ENCODE measurements at regions of chr3 and their contacts with region 1.

Region 1: DNA sequence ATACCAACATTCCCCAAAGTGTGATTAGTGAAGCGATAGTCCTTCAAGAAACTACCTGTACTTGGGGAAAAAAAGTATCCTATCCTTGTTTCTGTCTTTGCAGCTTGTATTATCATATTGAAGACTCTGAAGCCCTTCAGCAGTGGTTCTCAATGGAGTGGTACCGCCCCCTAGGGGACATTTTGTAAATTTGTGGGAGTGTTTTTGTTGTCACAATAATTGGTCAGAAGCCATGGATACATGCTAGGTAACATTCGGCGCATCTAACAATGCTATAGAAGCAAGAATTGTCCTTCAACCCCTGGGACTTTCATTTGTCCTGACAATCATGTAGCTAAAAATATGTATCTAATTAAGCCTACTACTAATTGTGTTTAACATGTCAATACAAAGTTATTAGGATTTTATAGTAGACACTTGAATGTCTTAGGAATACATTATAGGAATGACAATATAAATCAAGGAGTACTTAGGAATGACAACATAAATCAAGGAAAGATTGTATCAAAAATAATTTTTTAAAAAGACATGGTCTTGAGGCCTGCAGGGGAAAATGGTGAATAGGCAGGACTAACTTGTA is 53.7 kb downstream of the NMD3 start:
- DNase-seq: peak; percentile 72
- H3K4me3 Mint-ChIP-seq: no peak overlapping the region
- H3K27ac Mint-ChIP-seq: no peak overlapping the region
- H3K4me1 Mint-ChIP-seq: peaks cover 4% of the 10 kb centered on the region
- H3K27me3 Mint-ChIP-seq: no peaks in the 10 kb centered on the region
- CTCF ChIP-seq: peak; percentile 52

Region 2: DNA sequence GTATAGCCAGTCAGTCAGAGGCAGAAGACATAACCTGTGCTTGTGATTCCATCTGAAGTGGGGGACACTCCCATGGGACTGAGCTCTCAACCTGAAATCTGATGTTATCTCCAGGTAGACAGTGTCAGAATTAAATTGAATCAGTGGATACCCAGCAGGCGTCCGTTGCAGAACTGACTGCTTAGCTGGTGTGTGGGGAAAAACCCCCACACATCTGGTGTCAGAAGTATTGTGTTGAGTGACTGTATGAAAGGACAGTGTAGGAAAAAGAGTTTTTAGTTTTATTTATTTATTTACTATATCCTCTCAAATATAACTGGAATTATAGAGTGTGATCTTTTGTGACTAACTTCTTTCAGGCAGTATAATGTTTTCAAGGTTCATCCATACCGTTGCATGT is 719.8 kb before region 1 on chr3:
- CTCF ChIA-PET with region 1: no interaction called
- POLR2A ChIA-PET with region 1: no interaction called
- intact Hi-C with region 1: no loop called
- DNase-seq: no peak
- H3K4me3 Mint-ChIP-seq: no peak overlapping the region
- H3K27ac Mint-ChIP-seq: no peak overlapping the region
- H3K4me1 Mint-ChIP-seq: peaks cover 26% of the 10 kb centered on the region
- H3K27me3 Mint-ChIP-seq: no peaks in the 10 kb centered on the region
- CTCF ChIP-seq: no peak

Region 3: GRCh38 chr3:160771811-160772459 is 502.9 kb before region 1 on chr3:
- CTCF ChIA-PET with region 1: no interaction called
- POLR2A ChIA-PET with region 1: no interaction called
- intact Hi-C with region 1: no loop called
- DNase-seq: no peak
- H3K4me3 Mint-ChIP-seq: no peak overlapping the region
- H3K27ac Mint-ChIP-seq: no peak overlapping the region
- H3K4me1 Mint-ChIP-seq: no peaks in the 10 kb centered on the region
- H3K27me3 Mint-ChIP-seq: no peaks in the 10 kb centered on the region
- CTCF ChIP-seq: no peak

Region 4: DNA sequence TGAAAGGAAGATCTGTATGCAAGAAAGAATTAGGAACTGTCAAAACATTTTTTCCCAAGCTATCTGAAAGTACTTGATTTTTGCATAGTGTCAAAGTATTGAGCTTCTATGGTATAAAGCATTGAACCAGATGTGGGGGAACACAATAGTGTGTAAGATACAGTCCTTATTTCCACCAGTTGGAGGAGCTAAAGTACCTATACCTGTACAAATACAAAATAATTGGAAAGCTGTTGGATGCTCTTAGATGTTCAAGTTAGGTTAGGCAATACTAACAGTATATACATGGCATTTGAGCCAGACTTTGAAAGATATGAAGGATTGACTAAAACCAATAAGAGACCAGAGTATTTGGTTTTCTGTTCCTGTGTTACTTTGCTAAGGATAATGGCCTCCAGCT is 318.0 kb before region 1 on chr3:
- CTCF ChIA-PET with region 1: no interaction called
- POLR2A ChIA-PET with region 1: no interaction called
- intact Hi-C with region 1: loop called (anchors 1 kb)
- DNase-seq: peak; percentile 30
- H3K4me3 Mint-ChIP-seq: no peak overlapping the region
- H3K27ac Mint-ChIP-seq: no peak overlapping the region
- H3K4me1 Mint-ChIP-seq: no peaks in the 10 kb centered on the region
- H3K27me3 Mint-ChIP-seq: no peaks in the 10 kb centered on the region
- CTCF ChIP-seq: peak; percentile 29

Region 5: DNA sequence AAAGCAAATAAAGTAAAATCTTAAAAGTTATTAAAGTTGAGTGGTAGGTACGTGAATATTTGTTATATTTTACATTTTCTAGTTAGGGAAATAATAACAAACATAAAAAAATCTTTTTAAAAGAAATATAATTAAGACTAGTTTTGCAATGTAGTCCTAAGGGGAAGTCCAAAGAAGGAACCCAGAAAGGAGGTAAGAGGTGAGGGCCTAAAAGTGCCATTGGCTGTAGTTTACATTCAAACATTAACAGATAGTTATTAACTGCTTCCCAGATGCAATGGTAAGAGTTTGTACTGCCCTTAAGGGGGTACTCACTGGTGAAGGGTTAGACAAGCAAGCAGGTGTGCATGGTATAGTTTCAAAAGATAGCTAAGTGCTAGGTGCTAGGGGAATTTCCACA is 248.9 kb before region 1 on chr3:
- CTCF ChIA-PET with region 1: no interaction called
- POLR2A ChIA-PET with region 1: no interaction called
- intact Hi-C with region 1: no loop called
- DNase-seq: no peak
- H3K4me3 Mint-ChIP-seq: no peak overlapping the region
- H3K27ac Mint-ChIP-seq: no peak overlapping the region
- H3K4me1 Mint-ChIP-seq: no peaks in the 10 kb centered on the region
- H3K27me3 Mint-ChIP-seq: no peaks in the 10 kb centered on the region
- CTCF ChIP-seq: no peak

Region 6: GRCh38 chr3:161284989-161285388 is 10.2 kb after region 1 on chr3:
- CTCF ChIA-PET with region 1: interaction called, 32 read pairs
- POLR2A ChIA-PET with region 1: interaction called, 8 read pairs
- intact Hi-C with region 1: no loop called
- DNase-seq: peak; percentile 77
- H3K4me3 Mint-ChIP-seq: peak overlapping the region; percentile 8
- H3K27ac Mint-ChIP-seq: no peak overlapping the region
- H3K4me1 Mint-ChIP-seq: peaks cover 6% of the 10 kb centered on the region
- H3K27me3 Mint-ChIP-seq: no peaks in the 10 kb centered on the region
- CTCF ChIP-seq: no peak

Region 7: GRCh38 chr3:161305095-161305991 is 30.5 kb after region 1 on chr3:
- CTCF ChIA-PET with region 1: interaction called, 20 read pairs
- POLR2A ChIA-PET with region 1: no interaction called
- intact Hi-C with region 1: no loop called
- DNase-seq: peak; percentile 42
- H3K4me3 Mint-ChIP-seq: no peak overlapping the region
- H3K27ac Mint-ChIP-seq: no peak overlapping the region
- H3K4me1 Mint-ChIP-seq: no peaks in the 10 kb centered on the region
- H3K27me3 Mint-ChIP-seq: no peaks in the 10 kb centered on the region
- CTCF ChIP-seq: peak; percentile 66

Region 8: DNA sequence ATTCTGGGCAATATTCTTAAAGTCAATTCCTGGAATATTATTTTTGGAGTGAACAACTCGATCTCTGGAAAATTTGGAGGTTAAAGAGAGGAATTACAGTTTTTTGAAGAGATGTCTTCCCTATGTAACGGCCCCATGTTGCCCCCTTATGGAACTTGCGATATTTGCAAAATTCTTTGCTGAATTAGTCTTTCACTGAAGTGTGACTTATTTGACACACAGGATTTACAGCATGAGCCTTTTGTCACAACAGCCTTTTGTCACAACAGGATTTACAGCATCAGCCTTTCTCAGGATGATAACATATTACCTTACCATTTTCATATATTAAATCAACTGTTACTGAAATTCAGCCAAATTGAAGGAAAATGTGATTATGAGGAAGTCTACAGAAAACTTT is 134.3 kb after region 1 on chr3:
- CTCF ChIA-PET with region 1: interaction called, 110 read pairs
- POLR2A ChIA-PET with region 1: interaction called, 8 read pairs
- intact Hi-C with region 1: loop called (anchors 1 kb)
- DNase-seq: peak; percentile 76
- H3K4me3 Mint-ChIP-seq: no peak overlapping the region
- H3K27ac Mint-ChIP-seq: no peak overlapping the region
- H3K4me1 Mint-ChIP-seq: peaks cover 16% of the 10 kb centered on the region
- H3K27me3 Mint-ChIP-seq: no peaks in the 10 kb centered on the region
- CTCF ChIP-seq: peak; percentile 69

Region 9: DNA sequence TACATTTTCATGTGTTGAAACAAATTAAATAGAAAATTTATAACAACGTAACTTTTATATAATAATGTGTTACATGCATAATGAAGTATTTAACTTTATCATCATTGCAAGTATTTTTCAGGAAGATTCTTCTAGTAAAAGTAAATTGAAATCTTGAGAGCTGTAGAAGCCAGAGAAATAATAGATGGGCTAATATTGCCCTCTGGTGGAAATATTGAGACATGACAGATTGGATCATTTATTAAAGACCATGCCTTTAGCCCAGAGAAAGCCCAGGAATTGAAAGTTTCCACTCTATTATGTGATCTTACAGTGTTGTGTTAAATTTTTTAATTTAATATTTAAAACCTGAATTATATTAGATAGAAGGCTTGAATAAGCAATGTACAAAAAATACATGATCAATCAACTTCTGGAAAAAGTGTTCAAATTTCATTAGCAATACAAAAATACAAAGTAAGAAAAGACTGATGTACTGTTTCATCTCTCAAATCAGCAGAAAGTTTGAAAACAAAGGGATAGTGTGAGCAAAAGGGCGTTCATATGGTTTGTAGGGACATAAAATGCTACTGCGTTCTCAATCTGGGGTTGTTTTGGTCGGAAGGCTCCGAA is 149.2 kb after region 1 on chr3:
- CTCF ChIA-PET with region 1: interaction called, 63 read pairs
- POLR2A ChIA-PET with region 1: interaction called, 3 read pairs
- intact Hi-C with region 1: loop called (anchors 1 kb)
- DNase-seq: peak; percentile 64
- H3K4me3 Mint-ChIP-seq: no peak overlapping the region
- H3K27ac Mint-ChIP-seq: no peak overlapping the region
- H3K4me1 Mint-ChIP-seq: peaks cover 8% of the 10 kb centered on the region
- H3K27me3 Mint-ChIP-seq: no peaks in the 10 kb centered on the region
- CTCF ChIP-seq: peak; percentile 44